Sigmoid colon (tissue), 7 donors: ENCODE measurements at regions of chr4 and their contacts with region 1.

Region 1: GRCh38 chr4:3037957-3038461 is 36.3 kb downstream of the HTT-AS start:
- DNase-seq: no peak
- H3K4me3 ChIP-seq: peak overlapping the region in 3 of 4 donors; percentile 19 to 35 (median 28)
- H3K27ac ChIP-seq: no peak overlapping the region
- H3K4me1 ChIP-seq: peaks cover 0 to 24% (median 15%) of the 10 kb centered on the region in 4 donors
- H3K27me3 ChIP-seq: peaks cover 0 to 11% (median 0%) of the 10 kb centered on the region in 3 donors
- CTCF ChIP-seq: no peak
- EP300 ChIP-seq: no peak
- POLR2A ChIP-seq: no peak

Region 2: DNA sequence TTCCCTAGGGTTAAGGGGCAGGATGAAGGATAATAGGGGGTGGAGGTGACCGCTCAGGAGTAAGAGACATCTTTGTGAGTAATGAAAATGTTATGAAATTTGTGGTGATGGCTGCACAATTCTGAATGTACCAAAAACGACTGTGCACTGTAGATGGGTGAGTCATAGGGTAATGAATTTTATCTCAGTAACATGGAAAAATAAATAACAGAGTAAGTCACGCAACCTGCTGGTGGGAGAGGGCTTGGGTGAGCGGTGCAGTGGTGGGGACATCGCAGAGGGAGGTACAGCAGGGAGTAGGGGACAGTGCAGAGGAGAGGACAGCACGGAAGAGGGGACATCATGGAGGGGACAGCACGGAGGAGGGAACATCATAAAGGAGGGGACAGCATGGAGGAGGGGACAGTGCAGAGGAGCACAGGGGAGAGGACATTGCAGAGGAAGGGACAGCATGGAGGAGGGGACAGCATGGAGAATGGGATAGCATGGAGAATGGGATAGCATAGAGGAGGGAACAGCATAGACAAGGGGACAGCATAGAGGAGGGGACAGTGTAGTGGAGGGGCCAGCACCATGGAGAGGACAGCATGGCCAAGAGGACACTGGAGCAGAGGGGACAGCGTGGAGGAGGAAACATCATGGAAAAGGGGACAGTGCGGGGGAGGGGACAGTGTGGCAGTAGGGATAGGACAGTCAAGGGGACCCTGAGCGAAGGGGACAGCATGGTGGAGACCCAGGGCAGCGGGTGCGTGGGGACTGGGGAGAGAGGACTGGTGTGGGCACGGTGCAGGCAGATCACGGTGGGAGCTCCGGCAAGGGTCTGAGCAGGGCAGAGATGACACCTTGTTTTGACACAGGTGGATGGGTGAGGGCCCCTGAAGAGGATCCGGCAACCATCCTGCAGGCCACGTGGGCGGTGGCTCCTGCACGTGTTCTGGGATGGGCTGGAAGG is 707.6 kb before region 1 on chr4:
- intact Hi-C with region 1: no loop called
- DNase-seq: no peak
- H3K4me3 ChIP-seq: no peak overlapping the region
- H3K27ac ChIP-seq: no peak overlapping the region
- H3K4me1 ChIP-seq: no peaks in the 10 kb centered on the region
- H3K27me3 ChIP-seq: no peaks in the 10 kb centered on the region
- CTCF ChIP-seq: no peak
- EP300 ChIP-seq: no peak
- POLR2A ChIP-seq: no peak

Region 3: GRCh38 chr4:2765832-2766526 is 272.0 kb before region 1 on chr4:
- intact Hi-C with region 1: loop called (anchors 2 kb)
- DNase-seq: peak; percentile 40
- H3K4me3 ChIP-seq: no peak overlapping the region
- H3K27ac ChIP-seq: no peak overlapping the region
- H3K4me1 ChIP-seq: peaks cover 0 to 13% (median 8%) of the 10 kb centered on the region in 4 donors
- H3K27me3 ChIP-seq: peaks cover 0 to 4% (median 0%) of the 10 kb centered on the region in 3 donors
- CTCF ChIP-seq: no peak
- EP300 ChIP-seq: no peak
- POLR2A ChIP-seq: no peak

Region 4: GRCh38 chr4:3322059-3322550 is 284.1 kb after region 1 on chr4:
- intact Hi-C with region 1: no loop called
- DNase-seq: no peak
- H3K4me3 ChIP-seq: no peak overlapping the region
- H3K27ac ChIP-seq: peak overlapping the region in 2 of 4 donors; percentile 11 to 21
- H3K4me1 ChIP-seq: peaks cover 0 to 18% (median 3%) of the 10 kb centered on the region in 4 donors
- H3K27me3 ChIP-seq: no peaks in the 10 kb centered on the region
- CTCF ChIP-seq: no peak
- EP300 ChIP-seq: no peak
- POLR2A ChIP-seq: no peak